CD4-positive, alpha-beta memory T cell (primary cell): ENCODE measurements at regions of chr5 and their contacts with region 1.

Region 1: GRCh38 chr5:90739567-90739966 is 181.0 kb downstream of the ADGRV1 start:
- DNase-seq: no peak
- H3K4me3 ChIP-seq: no peak overlapping the region
- H3K4me3 Mint-ChIP-seq: no peak overlapping the region
- H3K27ac ChIP-seq: no peak overlapping the region
- H3K27ac Mint-ChIP-seq: no peak overlapping the region
- H3K4me1 ChIP-seq: no peaks in the 10 kb centered on the region
- H3K4me1 Mint-ChIP-seq: no peaks in the 10 kb centered on the region
- H3K27me3 ChIP-seq: no peaks in the 10 kb centered on the region
- H3K27me3 Mint-ChIP-seq: peaks cover 0 to 11% of the 10 kb centered on the region in 2 donors

Region 2: GRCh38 chr5:89043676-89044075 is 1695.9 kb before region 1 on chr5:
- CTCF ChIA-PET with region 1: no interaction called
- POLR2A ChIA-PET with region 1: no interaction called
- intact Hi-C with region 1: loop called (anchors 10 kb)
- DNase-seq: no peak
- H3K4me3 ChIP-seq: no peak overlapping the region
- H3K4me3 Mint-ChIP-seq: no peak overlapping the region
- H3K27ac ChIP-seq: no peak overlapping the region
- H3K27ac Mint-ChIP-seq: no peak overlapping the region
- H3K4me1 ChIP-seq: no peaks in the 10 kb centered on the region
- H3K4me1 Mint-ChIP-seq: no peaks in the 10 kb centered on the region
- H3K27me3 ChIP-seq: no peaks in the 10 kb centered on the region
- H3K27me3 Mint-ChIP-seq: no peaks in the 10 kb centered on the region

Region 3: DNA sequence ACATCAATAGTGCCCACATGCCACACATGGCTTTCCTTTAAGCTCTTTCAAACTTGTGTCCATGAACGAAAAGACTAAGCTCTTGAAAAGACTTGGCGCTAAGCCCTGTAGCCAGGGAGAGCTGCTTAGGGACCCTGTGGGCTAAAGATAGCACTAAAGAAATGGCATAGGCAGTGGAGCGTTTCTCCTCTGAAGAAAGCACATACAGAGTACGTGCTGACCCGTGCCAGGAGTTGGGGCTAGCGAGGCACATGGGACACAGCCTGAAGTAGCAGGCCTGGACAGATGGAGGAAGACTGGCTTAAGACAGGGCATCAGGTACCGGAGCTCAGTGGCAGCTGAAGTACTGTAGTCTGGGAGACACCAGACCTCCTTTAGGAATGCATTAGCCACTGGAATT is 141.3 kb before region 1 on chr5:
- CTCF ChIA-PET with region 1: no interaction called
- POLR2A ChIA-PET with region 1: no interaction called
- intact Hi-C with region 1: no loop called
- DNase-seq: no peak
- H3K4me3 ChIP-seq: no peak overlapping the region
- H3K4me3 Mint-ChIP-seq: no peak overlapping the region
- H3K27ac ChIP-seq: no peak overlapping the region
- H3K27ac Mint-ChIP-seq: no peak overlapping the region
- H3K4me1 ChIP-seq: no peaks in the 10 kb centered on the region
- H3K4me1 Mint-ChIP-seq: no peaks in the 10 kb centered on the region
- H3K27me3 ChIP-seq: no peaks in the 10 kb centered on the region
- H3K27me3 Mint-ChIP-seq: peaks cover 4 to 8% of the 10 kb centered on the region in 2 donors

Region 4: DNA sequence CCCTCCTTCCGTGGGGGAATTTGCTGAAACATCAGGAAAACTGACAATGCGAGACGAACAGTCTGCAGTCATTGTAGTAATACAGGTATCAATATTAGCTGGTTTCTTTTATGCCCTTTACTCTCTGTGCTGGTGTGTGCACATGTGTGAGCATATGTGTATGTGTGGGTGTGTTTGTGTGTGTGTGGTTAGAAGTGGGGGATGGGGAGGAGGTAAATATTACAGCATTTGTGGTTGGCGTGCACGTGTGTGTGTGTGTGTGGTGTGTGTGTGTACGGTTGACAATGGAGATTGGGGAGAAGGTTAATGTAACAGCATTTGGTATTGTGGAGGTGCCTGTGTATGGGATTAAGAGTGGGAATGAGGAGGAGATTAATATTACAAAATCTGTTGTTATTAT is 38.4 kb after region 1 on chr5:
- CTCF ChIA-PET with region 1: no interaction called
- POLR2A ChIA-PET with region 1: no interaction called
- intact Hi-C with region 1: no loop called
- DNase-seq: no peak
- H3K4me3 ChIP-seq: no peak overlapping the region
- H3K4me3 Mint-ChIP-seq: no peak overlapping the region
- H3K27ac ChIP-seq: no peak overlapping the region
- H3K27ac Mint-ChIP-seq: no peak overlapping the region
- H3K4me1 ChIP-seq: no peaks in the 10 kb centered on the region
- H3K4me1 Mint-ChIP-seq: no peaks in the 10 kb centered on the region
- H3K27me3 ChIP-seq: no peaks in the 10 kb centered on the region
- H3K27me3 Mint-ChIP-seq: peaks cover 0 to 7% of the 10 kb centered on the region in 2 donors